H1 (cell line): ENCODE measurements at regions of chr6 and their contacts with region 1.

Region 1: GRCh38 chr6:97705568-97705967 is 422.6 kb upstream of the MMS22L start:
- DNase-seq: peak in 1 of 2 experiments; percentile 59
- H3K4me3 ChIP-seq: no peak overlapping the region
- H3K27ac ChIP-seq: no peak overlapping the region
- H3K4me1 ChIP-seq: 0 out of 7 replicates have a peak, but pooled peaks cover 0 to 2% (median 0%) of the 10 kb centered on the region in 4 experiments
- H3K27me3 ChIP-seq: no peaks in the 10 kb centered on the region
- CTCF ChIP-seq: peak in 2 of 3 experiments; percentile 60 to 62; a peak in 3 of 4 replicates
- EP300 ChIP-seq: no peak
- POLR2A ChIP-seq: no peak
- RAD21 ChIP-seq: peak; percentile 94

Region 2: DNA sequence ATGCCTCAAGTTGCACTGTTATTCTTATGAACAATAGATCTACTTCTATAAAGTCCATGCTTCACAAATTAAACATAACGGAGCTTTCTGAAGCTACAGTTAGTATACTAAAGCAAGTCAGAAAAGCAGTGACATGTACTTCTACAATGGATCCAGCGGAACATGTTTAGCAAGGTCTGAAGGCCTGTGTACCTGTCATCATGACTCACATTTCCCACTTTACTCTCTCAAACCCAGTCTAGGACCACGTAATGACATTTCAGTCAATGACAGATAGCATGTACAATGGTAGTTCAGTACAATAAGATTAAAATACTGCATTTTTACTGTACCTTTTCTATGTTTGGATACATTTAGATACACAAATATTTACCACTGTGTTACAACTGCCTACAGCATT is 554.6 kb before region 1 on chr6:
- CTCF ChIA-PET with region 1: no interaction called
- POLR2A ChIA-PET with region 1: no interaction called
- DNase-seq: no peak
- H3K4me3 ChIP-seq: no peak overlapping the region
- H3K27ac ChIP-seq: no peak overlapping the region
- H3K4me1 ChIP-seq: no peaks in the 10 kb centered on the region
- H3K27me3 ChIP-seq: no peaks in the 10 kb centered on the region
- CTCF ChIP-seq: no peak
- EP300 ChIP-seq: no peak
- POLR2A ChIP-seq: no peak
- RAD21 ChIP-seq: no peak

Region 3: DNA sequence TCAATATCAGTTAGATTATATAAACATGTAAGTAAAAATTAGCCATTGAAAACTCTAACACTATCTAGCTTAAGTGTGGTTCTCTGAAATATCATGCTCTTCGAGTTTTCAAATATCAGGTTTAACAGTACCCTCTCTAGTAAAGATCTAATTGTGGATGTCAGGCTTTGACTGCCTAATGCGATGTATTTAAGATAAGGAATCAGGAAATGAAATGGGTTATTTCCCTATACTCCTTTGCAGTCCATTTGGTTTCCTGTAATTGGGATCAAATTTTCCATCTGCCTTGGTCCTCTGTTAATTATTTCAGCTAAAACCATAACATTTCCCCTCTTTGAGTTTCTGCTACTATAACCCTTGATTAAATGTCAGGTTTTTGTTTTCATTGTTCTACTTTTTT is 61.2 kb before region 1 on chr6:
- CTCF ChIA-PET with region 1: no interaction called
- POLR2A ChIA-PET with region 1: no interaction called
- DNase-seq: no peak
- H3K4me3 ChIP-seq: no peak overlapping the region
- H3K27ac ChIP-seq: no peak overlapping the region
- H3K4me1 ChIP-seq: no peaks in the 10 kb centered on the region
- H3K27me3 ChIP-seq: no peaks in the 10 kb centered on the region
- CTCF ChIP-seq: no peak
- EP300 ChIP-seq: no peak
- POLR2A ChIP-seq: no peak
- RAD21 ChIP-seq: no peak

Region 4: DNA sequence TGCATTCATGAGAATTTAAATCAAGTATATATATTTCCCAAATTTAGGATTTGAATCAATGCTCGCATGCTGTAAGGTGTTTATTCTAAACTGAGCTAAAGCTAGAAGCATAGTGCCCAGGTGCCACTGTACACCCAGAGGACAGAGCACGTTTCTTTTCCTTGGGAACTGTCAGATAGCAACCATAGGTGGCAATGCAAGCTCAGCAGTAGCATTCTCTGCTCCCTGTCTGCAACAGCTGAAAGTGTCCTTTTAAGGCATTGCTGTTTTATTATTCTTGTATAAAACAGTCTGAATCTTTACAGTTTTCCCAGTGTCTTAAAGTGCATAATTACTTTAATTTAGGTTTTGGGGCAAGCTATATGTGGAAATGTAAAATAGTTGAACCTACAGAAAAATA is 20.8 kb after region 1 on chr6:
- CTCF ChIA-PET with region 1: interaction called, 23 read pairs
- POLR2A ChIA-PET with region 1: no interaction called
- DNase-seq: peak in 1 of 2 experiments; percentile 9
- H3K4me3 ChIP-seq: no peak overlapping the region
- H3K27ac ChIP-seq: no peak overlapping the region
- H3K4me1 ChIP-seq: no peaks in the 10 kb centered on the region; a peak in 1 of 7 replicates
- H3K27me3 ChIP-seq: no peaks in the 10 kb centered on the region
- CTCF ChIP-seq: peak in 2 of 3 experiments; percentile 75; a peak in 3 of 4 replicates
- EP300 ChIP-seq: no peak
- POLR2A ChIP-seq: no peak
- RAD21 ChIP-seq: peak; percentile 94 to 97

Region 5: DNA sequence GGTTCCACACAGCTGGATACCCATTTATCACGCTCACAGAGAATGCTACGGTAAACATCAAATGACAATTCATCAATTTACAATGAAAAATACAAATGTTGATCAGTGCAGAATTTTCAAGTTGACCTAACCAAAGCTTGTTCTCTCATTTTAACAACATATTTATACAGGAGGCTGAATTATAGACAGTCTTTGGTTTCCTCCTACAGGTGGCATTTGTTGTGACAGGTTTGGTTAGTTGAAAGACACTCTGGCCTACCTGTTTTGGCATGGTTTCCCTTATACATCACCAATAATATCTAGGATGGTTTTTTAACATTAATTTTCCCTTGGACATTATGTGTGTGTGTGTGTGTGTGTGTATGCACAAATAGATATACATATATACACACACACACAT is 219.9 kb after region 1 on chr6:
- CTCF ChIA-PET with region 1: interaction called, 22 read pairs
- POLR2A ChIA-PET with region 1: no interaction called
- DNase-seq: no peak
- H3K4me3 ChIP-seq: no peak overlapping the region
- H3K27ac ChIP-seq: no peak overlapping the region
- H3K4me1 ChIP-seq: peaks cover 0 to 4% (median 3%) of the 10 kb centered on the region in 4 experiments; a peak in 2 of 7 replicates
- H3K27me3 ChIP-seq: no peaks in the 10 kb centered on the region
- CTCF ChIP-seq: peak in 2 of 3 experiments; percentile 35 to 50; a peak in 2 of 4 replicates
- EP300 ChIP-seq: no peak
- POLR2A ChIP-seq: no peak
- RAD21 ChIP-seq: peak; percentile 76